PC-9 (cell line): ENCODE measurements at regions of chr22 and their contacts with region 1.

Region 1: DNA sequence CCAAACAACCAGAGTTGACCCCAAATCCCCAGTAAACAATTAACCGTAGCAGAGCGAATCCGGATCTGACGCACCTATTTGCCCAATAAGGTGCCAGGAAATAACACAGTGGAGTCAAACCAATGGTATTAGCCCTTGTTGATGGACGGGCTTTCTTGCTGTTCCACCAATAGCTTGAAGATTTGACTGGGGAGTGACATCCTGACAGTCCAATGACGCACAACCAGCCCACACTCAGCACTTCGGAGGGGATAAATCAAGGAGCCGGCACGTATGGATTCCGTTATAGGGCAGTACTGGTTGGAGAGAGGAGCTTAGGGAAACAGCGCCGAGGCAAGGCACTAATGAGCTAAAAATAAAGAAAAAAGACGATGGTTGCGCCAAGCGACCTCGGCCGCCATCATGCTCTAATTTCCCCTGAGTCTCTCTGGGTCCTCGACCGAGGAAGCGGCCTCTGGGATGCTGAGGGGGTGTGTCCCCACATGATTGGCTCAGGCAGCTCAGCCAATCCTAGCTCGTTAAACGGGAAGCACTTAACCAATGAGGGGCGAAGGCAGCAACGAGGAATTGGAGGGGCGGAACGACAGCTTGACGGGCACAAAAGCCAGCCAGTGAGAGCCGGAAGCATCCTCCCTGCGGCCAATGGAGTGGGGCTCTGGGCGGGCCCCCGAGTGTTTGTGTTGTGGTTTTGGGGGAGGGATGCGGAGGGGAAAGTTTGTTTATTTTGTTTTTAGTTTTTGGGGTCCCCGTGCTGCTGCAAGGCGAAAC is 49.5 kb downstream of the FAM83F start:
- DNase-seq: peak; percentile 99
- H3K4me3 ChIP-seq: peak overlapping the region; percentile 65
- H3K27ac ChIP-seq: peak overlapping the region; percentile 46
- H3K4me1 ChIP-seq: peaks cover 29% of the 10 kb centered on the region
- H3K27me3 ChIP-seq: no peaks in the 10 kb centered on the region; the same call in 1 of the 2 replicates
- CTCF ChIP-seq: no peak

Region 2: GRCh38 chr22:38712486-38713207 is 1331.6 kb before region 1 on chr22:
- CTCF ChIA-PET with region 1: no interaction called
- POLR2A ChIA-PET with region 1: interaction called, 25 read pairs
- intact Hi-C with region 1: no loop called
- DNase-seq: no peak
- H3K4me3 ChIP-seq: no peak overlapping the region
- H3K27ac ChIP-seq: no peak overlapping the region
- H3K4me1 ChIP-seq: peaks cover 39% of the 10 kb centered on the region
- H3K27me3 ChIP-seq: no peaks in the 10 kb centered on the region
- CTCF ChIP-seq: no peak

Region 3: DNA sequence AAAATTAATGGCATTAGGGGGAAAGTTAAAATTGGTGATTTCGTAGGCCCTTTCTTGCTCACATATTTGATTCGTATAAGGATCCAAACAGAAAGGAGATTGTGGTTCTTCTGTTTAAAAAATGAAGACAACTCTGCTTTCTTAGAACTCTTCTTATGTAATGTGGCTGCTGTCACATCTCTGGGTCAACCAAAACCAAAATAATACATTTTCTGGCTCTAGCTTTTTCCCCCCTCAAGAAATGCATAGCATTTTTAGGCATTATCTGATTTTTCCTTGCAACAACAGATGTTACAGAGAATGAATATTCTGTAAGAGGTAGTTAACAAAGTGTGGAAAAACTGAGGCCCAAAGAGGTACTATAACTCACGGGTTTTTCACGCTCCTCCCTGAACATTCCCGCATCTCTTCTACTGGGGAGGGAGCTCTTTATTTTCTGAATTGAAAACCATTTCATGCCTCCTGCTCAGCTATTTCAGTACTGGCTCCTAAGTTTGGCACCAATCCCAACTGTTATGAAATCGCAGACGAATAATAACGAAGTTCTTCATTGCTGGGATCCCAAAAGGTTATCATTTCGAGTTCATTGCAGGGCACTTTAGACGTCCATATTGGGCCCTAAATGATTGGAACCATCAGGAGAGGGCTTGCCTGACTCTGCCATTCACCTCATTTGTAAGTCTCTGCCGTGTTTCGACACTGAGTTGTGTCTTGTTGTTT is 126.3 kb before region 1 on chr22:
- CTCF ChIA-PET with region 1: no interaction called
- POLR2A ChIA-PET with region 1: interaction called, 11 read pairs
- intact Hi-C with region 1: no loop called
- DNase-seq: no peak
- H3K4me3 ChIP-seq: no peak overlapping the region
- H3K27ac ChIP-seq: no peak overlapping the region
- H3K4me1 ChIP-seq: no peaks in the 10 kb centered on the region
- H3K27me3 ChIP-seq: peaks cover 85% of the 10 kb centered on the region
- CTCF ChIP-seq: no peak

Region 4: GRCh38 chr22:40156001-40156516 is 111.8 kb after region 1 on chr22:
- CTCF ChIA-PET with region 1: no interaction called
- POLR2A ChIA-PET with region 1: no interaction called
- intact Hi-C with region 1: loop called (anchors 1 kb)
- DNase-seq: peak; percentile 68 to 98
- H3K4me3 ChIP-seq: peak overlapping the region; percentile 0; the same call in 1 of the 2 replicates
- H3K27ac ChIP-seq: peak overlapping the region; percentile 36
- H3K4me1 ChIP-seq: peaks cover 26% of the 10 kb centered on the region
- H3K27me3 ChIP-seq: no peaks in the 10 kb centered on the region
- CTCF ChIP-seq: peak; percentile 54; the same call in 1 of the 2 replicates

Region 5: GRCh38 chr22:40193429-40194421 is 149.4 kb after region 1 on chr22:
- CTCF ChIA-PET with region 1: no interaction called
- POLR2A ChIA-PET with region 1: no interaction called
- intact Hi-C with region 1: no loop called
- DNase-seq: no peak
- H3K4me3 ChIP-seq: no peak overlapping the region
- H3K27ac ChIP-seq: no peak overlapping the region
- H3K4me1 ChIP-seq: peaks cover 17% of the 10 kb centered on the region
- H3K27me3 ChIP-seq: no peaks in the 10 kb centered on the region
- CTCF ChIP-seq: peak; percentile 45

Region 6: DNA sequence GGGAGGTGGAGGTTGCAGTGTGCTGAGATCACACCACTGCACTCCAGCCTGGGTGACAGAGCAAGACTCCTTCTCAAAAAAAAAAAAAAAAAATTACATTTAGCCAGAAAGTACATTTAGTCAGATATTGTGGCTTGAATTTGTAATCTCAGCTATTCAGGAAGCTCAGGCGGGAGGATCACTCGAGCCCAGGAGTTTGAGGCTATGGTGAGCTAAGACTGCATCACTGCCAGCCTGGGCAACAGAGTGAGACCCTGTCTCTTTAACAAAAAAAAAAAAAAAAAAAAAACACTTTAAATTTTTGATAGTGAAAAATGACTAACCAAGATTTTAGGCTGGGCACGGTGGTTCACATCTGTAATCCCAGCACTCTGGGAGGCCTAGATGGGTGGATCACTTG is 564.9 kb after region 1 on chr22:
- CTCF ChIA-PET with region 1: no interaction called
- POLR2A ChIA-PET with region 1: interaction called, 15 read pairs
- intact Hi-C with region 1: no loop called
- DNase-seq: no peak
- H3K4me3 ChIP-seq: no peak overlapping the region
- H3K27ac ChIP-seq: no peak overlapping the region
- H3K4me1 ChIP-seq: peaks cover 23% of the 10 kb centered on the region
- H3K27me3 ChIP-seq: no peaks in the 10 kb centered on the region
- CTCF ChIP-seq: no peak